Endothelial cell of umbilical vein (primary cell): ENCODE measurements at regions of chr15 and their contacts with region 1.

Region 1: GRCh38 chr15:63466378-63467192 is 37.8 kb upstream of the USP3 start:
- DNase-seq: peak; percentile 77
- H3K4me3 ChIP-seq: no peak overlapping the region
- H3K27ac ChIP-seq: no peak overlapping the region
- H3K4me1 ChIP-seq: peaks cover 8% of the 10 kb centered on the region
- H3K27me3 ChIP-seq: no peaks in the 10 kb centered on the region
- CTCF ChIP-seq: peak; percentile 54 to 63
- POLR2A ChIP-seq: no peak

Region 2: GRCh38 chr15:63442080-63442479 is 24.5 kb before region 1 on chr15:
- CTCF ChIA-PET with region 1: interaction called, 13 read pairs
- POLR2A ChIA-PET with region 1: no interaction called
- dilution Hi-C with region 1: no loop called
- intact Hi-C with region 1: no loop called
- DNase-seq: no peak
- H3K4me3 ChIP-seq: no peak overlapping the region
- H3K27ac ChIP-seq: no peak overlapping the region
- H3K4me1 ChIP-seq: peaks cover 1% of the 10 kb centered on the region
- H3K27me3 ChIP-seq: peaks cover 5 to 10% of the 10 kb centered on the region in 2 experiments
- CTCF ChIP-seq: no peak
- POLR2A ChIP-seq: no peak

Region 3: GRCh38 chr15:63487076-63487757 is 20.6 kb after region 1 on chr15:
- CTCF ChIA-PET with region 1: interaction called, 30 read pairs
- POLR2A ChIA-PET with region 1: no interaction called
- dilution Hi-C with region 1: no loop called
- intact Hi-C with region 1: no loop called
- DNase-seq: peak; percentile 79
- H3K4me3 ChIP-seq: no peak overlapping the region
- H3K27ac ChIP-seq: no peak overlapping the region
- H3K4me1 ChIP-seq: peaks cover 14% of the 10 kb centered on the region
- H3K27me3 ChIP-seq: peaks cover 0 to 2% of the 10 kb centered on the region in 2 experiments
- CTCF ChIP-seq: peak; percentile 98
- POLR2A ChIP-seq: no peak

Region 4: GRCh38 chr15:63553388-63553791 is 86.8 kb after region 1 on chr15:
- CTCF ChIA-PET with region 1: interaction called, 15 read pairs
- POLR2A ChIA-PET with region 1: no interaction called
- dilution Hi-C with region 1: no loop called
- intact Hi-C with region 1: no loop called
- DNase-seq: peak; percentile 89
- H3K4me3 ChIP-seq: no peak overlapping the region
- H3K27ac ChIP-seq: peak overlapping the region; percentile 50
- H3K4me1 ChIP-seq: peaks cover 15% of the 10 kb centered on the region
- H3K27me3 ChIP-seq: no peaks in the 10 kb centered on the region
- CTCF ChIP-seq: no peak
- POLR2A ChIP-seq: no peak

Region 5: GRCh38 chr15:63610200-63610841 is 143.7 kb after region 1 on chr15:
- CTCF ChIA-PET with region 1: interaction called, 24 read pairs
- POLR2A ChIA-PET with region 1: no interaction called
- dilution Hi-C with region 1: no loop called
- intact Hi-C with region 1: no loop called
- DNase-seq: peak; percentile 85
- H3K4me3 ChIP-seq: no peak overlapping the region
- H3K27ac ChIP-seq: peak overlapping the region; percentile 18
- H3K4me1 ChIP-seq: peaks cover 18% of the 10 kb centered on the region
- H3K27me3 ChIP-seq: no peaks in the 10 kb centered on the region
- CTCF ChIP-seq: peak; percentile 70 to 73
- POLR2A ChIP-seq: no peak